H1 (cell line): ENCODE measurements at regions of chr7 and their contacts with region 1.

Region 1: DNA sequence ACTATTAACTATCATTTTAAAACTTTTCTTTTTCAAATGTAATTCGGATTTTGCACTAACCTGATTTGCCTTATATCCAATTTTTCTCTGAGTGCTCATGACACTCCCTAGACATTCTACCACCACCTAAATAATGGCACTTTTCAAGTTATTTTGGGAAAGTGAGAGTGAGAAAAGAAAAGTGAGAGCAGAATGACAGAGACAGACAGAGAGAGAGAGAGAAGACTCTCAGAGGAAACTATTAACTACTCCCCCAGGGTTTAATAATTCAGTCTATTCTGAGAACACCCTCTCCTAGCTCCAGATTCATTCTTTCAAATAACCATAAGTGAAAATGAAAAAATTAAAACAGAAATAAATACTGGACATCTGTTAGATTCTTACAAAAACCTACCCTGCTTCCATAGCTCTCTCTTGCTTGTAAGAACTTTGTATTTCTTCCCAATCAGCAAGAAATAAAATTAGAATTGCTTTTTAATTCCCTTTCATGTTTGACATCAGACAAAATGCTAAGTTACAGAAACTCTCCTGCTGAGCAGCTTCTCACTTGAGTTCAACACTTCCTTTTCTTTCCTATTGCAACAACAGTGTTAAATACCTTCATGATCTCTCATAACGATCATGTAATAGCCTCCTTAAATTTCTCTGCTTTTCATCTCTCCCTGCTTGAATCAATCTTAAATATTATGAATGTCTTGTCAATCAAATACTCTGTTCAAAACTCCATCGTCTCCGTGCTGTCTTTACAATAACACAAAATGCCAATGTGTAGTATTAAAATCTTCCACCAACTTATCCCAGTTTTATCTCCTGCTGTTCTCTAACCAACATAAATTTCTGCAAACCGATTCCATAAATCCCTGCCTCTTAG is 191.7 kb downstream of the SEMA3E start:
- DNase-seq: no peak
- H3K4me3 ChIP-seq: peak overlapping the region in 2 of 4 experiments; percentile 4 to 21; a peak in 2 of 8 replicates
- H3K27ac ChIP-seq: no peak overlapping the region
- H3K4me1 ChIP-seq: peaks cover 0 to 22% (median 10%) of the 10 kb centered on the region in 4 experiments; a peak in 5 of 7 replicates
- H3K27me3 ChIP-seq: no peaks in the 10 kb centered on the region
- CTCF ChIP-seq: no peak
- EP300 ChIP-seq: no peak
- POLR2A ChIP-seq: no peak
- RAD21 ChIP-seq: no peak

Region 2: GRCh38 chr7:83427929-83428328 is 29.3 kb before region 1 on chr7:
- CTCF ChIA-PET with region 1: interaction called, 3 read pairs
- POLR2A ChIA-PET with region 1: interaction called, 11 read pairs
- DNase-seq: no peak
- H3K4me3 ChIP-seq: peak overlapping the region in 1 of 4 experiments; percentile 22; a peak in 1 of 8 replicates
- H3K27ac ChIP-seq: no peak overlapping the region
- H3K4me1 ChIP-seq: peaks cover 0 to 17% (median 5%) of the 10 kb centered on the region in 4 experiments; a peak in 5 of 7 replicates
- H3K27me3 ChIP-seq: no peaks in the 10 kb centered on the region
- CTCF ChIP-seq: no peak
- EP300 ChIP-seq: no peak
- POLR2A ChIP-seq: no peak
- RAD21 ChIP-seq: no peak

Region 3: DNA sequence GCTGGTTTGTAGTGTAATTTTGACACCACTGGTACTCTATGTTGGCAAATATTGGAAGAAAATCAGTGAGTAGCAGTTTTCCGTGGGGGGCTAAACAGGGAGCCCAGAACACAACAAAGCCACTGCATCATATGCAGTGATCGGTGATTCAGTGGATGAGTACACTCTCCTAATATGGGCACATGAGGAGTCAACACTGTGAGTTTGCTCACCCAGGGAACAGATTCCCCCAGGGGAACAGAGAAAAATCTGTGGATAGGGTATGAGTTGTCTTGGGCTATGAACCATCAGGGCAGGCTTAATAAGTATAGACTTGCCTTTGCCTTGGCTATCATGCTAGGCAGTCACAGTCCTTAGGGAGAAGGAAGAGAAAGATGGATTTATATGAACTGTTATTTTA is 419.3 kb after region 1 on chr7:
- CTCF ChIA-PET with region 1: no interaction called
- POLR2A ChIA-PET with region 1: no interaction called
- DNase-seq: no peak
- H3K4me3 ChIP-seq: no peak overlapping the region
- H3K27ac ChIP-seq: no peak overlapping the region
- H3K4me1 ChIP-seq: no peaks in the 10 kb centered on the region
- H3K27me3 ChIP-seq: no peaks in the 10 kb centered on the region
- CTCF ChIP-seq: no peak
- EP300 ChIP-seq: no peak
- POLR2A ChIP-seq: no peak
- RAD21 ChIP-seq: no peak